Naive thymus-derived CD4-positive, alpha-beta T cell (primary cell): ENCODE measurements at regions of chr21 and their contacts with region 1.

Region 1: DNA sequence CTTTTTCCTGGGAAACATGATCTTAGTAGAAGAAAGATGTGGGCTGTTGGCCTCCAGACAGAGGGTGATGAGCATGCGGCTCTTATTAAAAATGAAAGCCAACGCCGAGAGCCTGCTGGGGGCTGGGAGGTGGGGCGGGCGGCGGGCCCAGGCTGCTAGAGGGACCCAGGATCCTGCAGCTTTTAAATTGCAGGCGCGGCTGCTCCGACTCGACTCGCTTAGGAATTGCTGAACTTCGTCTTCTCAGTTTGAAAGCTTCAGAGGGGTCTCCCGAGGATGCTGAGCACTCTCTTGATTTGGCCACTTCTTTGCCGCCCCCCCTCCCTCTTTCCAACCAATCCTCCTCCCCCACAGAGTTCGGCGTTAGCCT is 1.2 kb downstream of the AGPAT3 start:
- DNase-seq: peak in 5 of 9 donors; percentile 17 to 44 (median 31)
- ATAC-seq: peak; percentile 42
- H3K4me3 ChIP-seq: peak overlapping the region; percentile 62
- H3K4me3 Mint-ChIP-seq: peak overlapping the region; percentile 79 to 89 (median 85)
- H3K27ac ChIP-seq: peak overlapping the region; percentile 72
- H3K27ac Mint-ChIP-seq: peak overlapping the region; percentile 77 to 91 (median 89)
- H3K4me1 ChIP-seq: peaks cover 18 to 21% of the 10 kb centered on the region in 2 donors
- H3K4me1 Mint-ChIP-seq: peaks cover 28 to 50% (median 41%) of the 10 kb centered on the region in 7 donors
- H3K27me3 ChIP-seq: no peaks in the 10 kb centered on the region
- H3K27me3 Mint-ChIP-seq: peaks cover 0 to 1% (median 0%) of the 10 kb centered on the region in 5 donors

Region 2: DNA sequence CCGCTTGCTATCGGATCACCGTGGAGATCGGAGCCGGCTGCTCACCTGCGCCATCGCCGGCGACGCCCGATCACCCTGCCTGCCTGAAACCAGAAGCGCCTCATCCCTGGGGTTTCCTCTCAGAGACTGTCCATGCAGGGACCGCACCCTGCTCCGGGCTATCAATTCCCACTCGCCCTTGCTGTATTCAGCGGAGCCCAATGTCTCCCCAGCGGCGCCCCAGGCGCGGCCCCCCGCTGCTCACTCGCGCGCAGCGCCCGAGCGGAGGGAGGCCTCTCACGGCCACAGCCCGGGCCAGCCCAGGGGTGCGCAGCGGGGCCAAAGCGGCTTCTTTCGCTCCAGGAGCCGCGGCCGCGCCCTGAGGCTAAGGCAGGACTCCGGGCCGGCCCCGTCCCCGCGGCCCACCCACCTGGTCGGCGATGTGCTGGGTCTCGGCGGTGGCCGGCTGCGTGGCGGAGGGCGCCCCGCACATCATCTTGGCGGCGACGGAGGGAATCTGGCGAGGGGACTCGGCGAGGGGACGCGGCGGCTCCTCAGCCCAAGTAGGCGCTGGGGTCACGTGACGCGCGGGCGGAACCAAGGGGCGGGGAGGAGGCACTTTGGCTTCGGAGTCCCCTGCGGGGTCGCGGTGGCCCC is 90.3 kb before region 1 on chr21 and contains the start of gene CSTB:
- CTCF ChIA-PET with region 1: no interaction called
- POLR2A ChIA-PET with region 1: no interaction called
- intact Hi-C with region 1: loop called in 1 of 2 experiments (anchors 1 kb)
- DNase-seq: peak; percentile 62 to 91 (median 78)
- ATAC-seq: peak; percentile 85
- H3K4me3 ChIP-seq: peak within 1 kb of the TSS; percentile 64
- H3K4me3 Mint-ChIP-seq: peak within 1 kb of the TSS; percentile 89 to 96 (median 94)
- H3K27ac ChIP-seq: peak within 1 kb of the TSS; percentile 77
- H3K27ac Mint-ChIP-seq: peak within 1 kb of the TSS; percentile 80 to 91 (median 84)
- H3K4me1 ChIP-seq: peaks cover 11 to 18% of the 10 kb centered on the region in 2 donors
- H3K4me1 Mint-ChIP-seq: peaks cover 29 to 59% (median 41%) of the 10 kb centered on the region in 7 donors
- H3K27me3 ChIP-seq: no peaks in the 10 kb centered on the region
- H3K27me3 Mint-ChIP-seq: no peaks in the 10 kb centered on the region
- total RNA-seq, gene CSTB: 14.7 to 66.5 (median 36.6) TPM

Region 3: DNA sequence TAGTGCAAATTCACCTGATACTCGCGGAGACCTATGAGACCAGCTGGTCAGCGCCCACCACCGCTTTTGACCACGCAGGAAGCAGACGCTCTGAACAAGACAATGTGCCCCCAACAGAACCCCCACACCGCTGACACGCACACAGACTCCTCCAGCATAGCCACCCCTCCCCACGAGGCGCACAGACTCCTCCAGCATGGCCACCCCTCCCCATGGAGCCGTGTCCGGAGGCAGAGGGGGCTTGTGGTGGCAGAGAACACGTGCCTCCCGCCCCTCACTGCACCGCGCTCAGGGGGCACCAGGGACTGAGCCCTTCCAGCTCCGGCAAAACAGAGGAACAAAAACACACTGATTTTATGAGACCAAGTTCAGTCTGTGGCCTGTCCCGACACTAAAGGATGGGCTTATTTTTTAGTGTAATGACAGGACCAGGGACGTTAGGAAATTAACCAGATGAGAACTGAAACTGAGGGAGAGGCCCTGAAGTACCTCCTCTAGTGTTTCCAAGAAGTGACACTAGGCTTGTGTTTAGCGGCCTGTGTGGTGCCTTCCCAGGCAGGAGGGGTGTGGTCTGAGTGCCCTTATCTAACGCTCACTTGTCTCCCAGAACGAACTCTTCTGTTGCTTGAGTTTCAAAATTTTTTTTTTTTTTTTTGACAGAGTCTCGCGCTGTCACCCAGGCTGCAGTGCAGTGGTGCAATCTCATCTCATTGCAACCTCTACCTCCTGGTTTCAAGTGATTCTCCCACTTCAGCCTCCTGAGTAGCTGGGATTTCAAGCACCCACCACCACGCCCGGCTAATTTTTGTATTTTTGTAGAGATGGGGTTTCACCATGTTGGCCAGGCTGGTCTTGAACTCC is 11.2 kb before region 1 on chr21:
- CTCF ChIA-PET with region 1: no interaction called
- POLR2A ChIA-PET with region 1: no interaction called
- intact Hi-C with region 1: loop called in 1 of 2 experiments (anchors 1 kb)
- DNase-seq: peak in 1 of 9 donors; percentile 61
- ATAC-seq: peak; percentile 87
- H3K4me3 ChIP-seq: no peak overlapping the region
- H3K4me3 Mint-ChIP-seq: peak overlapping the region in 1 of 10 donors; percentile 81
- H3K27ac ChIP-seq: no peak overlapping the region
- H3K27ac Mint-ChIP-seq: peak overlapping the region in 1 of 9 donors; percentile 93
- H3K4me1 ChIP-seq: no peaks in the 10 kb centered on the region
- H3K4me1 Mint-ChIP-seq: peaks cover 0 to 47% (median under 1%) of the 10 kb centered on the region in 7 donors
- H3K27me3 ChIP-seq: no peaks in the 10 kb centered on the region
- H3K27me3 Mint-ChIP-seq: peaks cover 0 to 10% (median 5%) of the 10 kb centered on the region in 5 donors

Region 4: GRCh38 chr21:43916691-43917514 is 50.7 kb after region 1 on chr21:
- CTCF ChIA-PET with region 1: no interaction called
- POLR2A ChIA-PET with region 1: interaction called, 9 read pairs
- intact Hi-C with region 1: loop called (anchors 1 to 5 kb)
- DNase-seq: peak; percentile 56 to 83 (median 80)
- ATAC-seq: peak; percentile 93
- H3K4me3 ChIP-seq: peak overlapping the region; percentile 71
- H3K4me3 Mint-ChIP-seq: peak overlapping the region; percentile 83 to 95 (median 89)
- H3K27ac ChIP-seq: peak overlapping the region; percentile 84
- H3K27ac Mint-ChIP-seq: peak overlapping the region; percentile 86 to 96 (median 94)
- H3K4me1 ChIP-seq: peaks cover 25 to 33% of the 10 kb centered on the region in 2 donors
- H3K4me1 Mint-ChIP-seq: peaks cover 47 to 74% (median 61%) of the 10 kb centered on the region in 7 donors
- H3K27me3 ChIP-seq: no peaks in the 10 kb centered on the region
- H3K27me3 Mint-ChIP-seq: peaks cover 0 to 4% (median 0%) of the 10 kb centered on the region in 5 donors

Region 5: DNA sequence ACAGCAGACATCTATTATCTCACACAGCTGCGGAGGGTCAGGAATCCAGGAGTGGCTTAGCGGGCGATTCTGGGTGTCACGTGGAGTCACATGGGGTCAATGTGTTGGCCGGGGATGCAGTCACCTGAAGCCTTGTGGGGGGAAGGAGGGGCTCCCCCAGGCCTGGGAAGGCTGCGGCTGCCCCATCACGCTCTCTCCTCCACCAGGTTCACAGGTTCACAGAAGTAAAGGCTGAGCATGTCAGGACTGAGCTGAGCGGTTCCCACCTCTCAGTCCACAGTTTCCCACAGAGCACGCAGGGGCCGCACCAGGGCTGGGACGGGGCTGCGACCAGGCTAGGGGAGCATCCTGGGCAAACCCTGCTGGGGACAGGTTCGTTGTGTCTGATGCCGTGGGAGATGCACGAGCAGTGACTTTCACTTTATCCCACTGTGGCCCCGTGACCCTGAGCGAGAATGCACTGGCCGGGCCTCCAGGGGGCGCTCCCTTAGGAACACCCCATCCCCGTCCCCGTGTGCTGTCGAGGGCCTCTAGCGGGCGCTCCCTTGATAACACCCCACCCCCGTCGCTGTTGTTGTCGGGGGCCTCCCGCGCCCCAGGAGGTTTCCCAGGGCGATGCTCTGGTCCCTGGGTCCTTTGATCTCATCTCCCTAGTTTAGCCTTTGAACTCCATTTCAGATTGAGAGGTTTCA is 72.7 kb after region 1 on chr21:
- CTCF ChIA-PET with region 1: interaction called, 3 read pairs
- POLR2A ChIA-PET with region 1: no interaction called
- intact Hi-C with region 1: loop called (anchors 1 to 5 kb)
- DNase-seq: peak; percentile 81 to 92 (median 90)
- ATAC-seq: peak; percentile 100
- H3K4me3 ChIP-seq: peak overlapping the region; percentile 63
- H3K4me3 Mint-ChIP-seq: peak overlapping the region; percentile 79 to 95 (median 88)
- H3K27ac ChIP-seq: peak overlapping the region; percentile 64
- H3K27ac Mint-ChIP-seq: peak overlapping the region; percentile 39 to 96 (median 85)
- H3K4me1 ChIP-seq: peaks cover 0 to 9% of the 10 kb centered on the region in 2 donors
- H3K4me1 Mint-ChIP-seq: peaks cover 17 to 27% (median 21%) of the 10 kb centered on the region in 7 donors
- H3K27me3 ChIP-seq: no peaks in the 10 kb centered on the region
- H3K27me3 Mint-ChIP-seq: no peaks in the 10 kb centered on the region